Activated CD4-positive, alpha-beta T cell treated with anti-CD3 and anti-CD28 coated beads for 36 hours (primary cell): ENCODE measurements at regions of chr7 and their contacts with region 1.

Region 1: GRCh38 chr7:23013715-23014649 is at the start of gene HYCC1:
- DNase-seq: peak; percentile 99
- ATAC-seq: peak; percentile 99
- H3K4me3 Mint-ChIP-seq: peak within 1 kb of the TSS; percentile 92
- H3K27ac Mint-ChIP-seq: peak within 1 kb of the TSS; percentile 83
- H3K4me1 Mint-ChIP-seq: peaks cover 24% of the 10 kb centered on the region
- H3K27me3 Mint-ChIP-seq: peaks cover 3% of the 10 kb centered on the region
- total RNA-seq, gene HYCC1: 19.2 to 23.9 TPM

Region 2: DNA sequence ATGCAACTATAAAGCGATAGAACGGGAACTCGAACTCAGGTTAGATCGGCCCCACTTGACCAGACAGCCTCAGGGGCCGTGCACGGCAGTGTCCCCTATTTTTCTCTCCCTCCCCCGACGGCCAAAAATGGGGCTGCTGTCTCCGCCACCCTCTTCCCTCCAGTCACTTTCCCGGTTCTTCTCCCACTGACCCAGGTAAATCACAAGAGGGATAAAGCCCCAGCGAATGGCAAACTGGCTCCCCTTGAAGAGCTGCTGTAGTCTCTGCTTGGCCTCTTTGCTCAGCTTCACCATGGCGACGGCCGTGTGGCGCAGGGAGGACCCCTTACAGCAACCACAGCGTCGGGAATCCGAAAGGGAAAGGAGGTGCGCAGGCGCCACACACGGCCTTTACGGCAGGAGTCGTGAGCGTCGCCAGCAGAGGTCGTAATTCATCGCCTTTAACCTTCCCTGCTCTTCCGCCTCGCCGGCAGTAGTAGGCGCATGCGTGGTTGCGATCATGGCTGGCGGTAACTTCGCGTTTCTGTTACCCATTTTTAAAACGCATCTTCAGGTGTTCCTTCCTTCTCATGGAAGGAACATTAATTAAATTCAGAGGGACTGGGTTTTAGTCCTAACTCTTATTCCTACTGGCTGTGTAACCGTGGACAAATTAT is 191.4 kb before region 1 on chr7 and contains the start of gene TOMM7:
- CTCF ChIA-PET with region 1: interaction called, 3 read pairs
- POLR2A ChIA-PET with region 1: no interaction called
- intact Hi-C with region 1: loop called (anchors 1 to 2 kb)
- DNase-seq: peak; percentile 92
- ATAC-seq: peak; percentile 81
- H3K4me3 Mint-ChIP-seq: peak within 1 kb of the TSS; percentile 98
- H3K27ac Mint-ChIP-seq: peak within 1 kb of the TSS; percentile 93
- H3K4me1 Mint-ChIP-seq: peaks cover 35% of the 10 kb centered on the region
- H3K27me3 Mint-ChIP-seq: peaks cover 6% of the 10 kb centered on the region
- total RNA-seq, gene TOMM7: 73.7 to 254 TPM

Region 3: GRCh38 chr7:22854158-22855048 is 159.6 kb before region 1 on chr7:
- CTCF ChIA-PET with region 1: no interaction called
- POLR2A ChIA-PET with region 1: no interaction called
- intact Hi-C with region 1: loop called (anchors 1 kb)
- DNase-seq: peak; percentile 89
- ATAC-seq: peak; percentile 74
- H3K4me3 Mint-ChIP-seq: peak overlapping the region; percentile 92
- H3K27ac Mint-ChIP-seq: peak overlapping the region; percentile 92
- H3K4me1 Mint-ChIP-seq: peaks cover 34% of the 10 kb centered on the region
- H3K27me3 Mint-ChIP-seq: peaks cover 2% of the 10 kb centered on the region

Region 4: GRCh38 chr7:23298885-23299769 is 285.1 kb after region 1 on chr7 and contains the start of gene MALSU1:
- CTCF ChIA-PET with region 1: no interaction called
- POLR2A ChIA-PET with region 1: no interaction called
- intact Hi-C with region 1: loop called in 1 of 2 experiments (anchors 5 kb)
- DNase-seq: peak; percentile 99
- ATAC-seq: peak; percentile 97
- H3K4me3 Mint-ChIP-seq: peak within 1 kb of the TSS; percentile 98
- H3K27ac Mint-ChIP-seq: peak within 1 kb of the TSS; percentile 97
- H3K4me1 Mint-ChIP-seq: peaks cover 38% of the 10 kb centered on the region
- H3K27me3 Mint-ChIP-seq: no peaks in the 10 kb centered on the region
- total RNA-seq, gene MALSU1: 97.7 to 98.4 TPM